Esophagus squamous epithelium (tissue), 5 donors: ENCODE measurements at regions of chr6 and their contacts with region 1.

Region 1: GRCh38 chr6:912871-913835 is 220.2 kb upstream of the EXOC2 start:
- DNase-seq: no peak
- H3K4me3 ChIP-seq: no peak overlapping the region
- H3K27ac ChIP-seq: no peak overlapping the region
- H3K4me1 ChIP-seq: peaks cover 0 to 10% (median 0%) of the 10 kb centered on the region in 3 donors
- H3K27me3 ChIP-seq: peaks cover 0 to 11% (median 0%) of the 10 kb centered on the region in 4 donors
- CTCF ChIP-seq: peak; percentile 15 to 63 (median 46)
- POLR2A ChIP-seq: no peak

Region 2: DNA sequence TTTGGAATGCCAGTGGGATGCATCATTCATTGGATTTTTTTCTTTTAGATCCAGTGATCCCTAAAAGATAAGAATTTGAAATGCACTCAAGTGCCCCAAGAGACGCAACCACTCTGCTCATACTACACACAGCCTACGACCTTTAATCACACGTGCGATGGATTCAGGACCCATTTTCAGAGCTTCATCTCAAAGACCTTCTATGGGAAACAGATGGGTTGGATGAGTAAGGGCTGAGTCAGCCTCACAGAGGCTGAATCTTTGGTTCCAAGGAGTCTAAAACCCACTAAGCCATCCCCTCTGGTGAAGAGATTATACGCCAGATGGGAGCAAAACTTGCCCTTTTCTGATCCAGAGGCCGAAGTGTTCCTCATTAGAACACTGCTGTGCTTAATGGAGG is 45.4 kb after region 1 on chr6:
- intact Hi-C with region 1: no loop called
- DNase-seq: no peak
- H3K4me3 ChIP-seq: no peak overlapping the region
- H3K27ac ChIP-seq: no peak overlapping the region
- H3K4me1 ChIP-seq: peaks cover 0 to 8% (median 5%) of the 10 kb centered on the region in 3 donors
- H3K27me3 ChIP-seq: peaks cover 0 to 6% (median 0%) of the 10 kb centered on the region in 4 donors
- CTCF ChIP-seq: no peak
- POLR2A ChIP-seq: no peak

Region 3: DNA sequence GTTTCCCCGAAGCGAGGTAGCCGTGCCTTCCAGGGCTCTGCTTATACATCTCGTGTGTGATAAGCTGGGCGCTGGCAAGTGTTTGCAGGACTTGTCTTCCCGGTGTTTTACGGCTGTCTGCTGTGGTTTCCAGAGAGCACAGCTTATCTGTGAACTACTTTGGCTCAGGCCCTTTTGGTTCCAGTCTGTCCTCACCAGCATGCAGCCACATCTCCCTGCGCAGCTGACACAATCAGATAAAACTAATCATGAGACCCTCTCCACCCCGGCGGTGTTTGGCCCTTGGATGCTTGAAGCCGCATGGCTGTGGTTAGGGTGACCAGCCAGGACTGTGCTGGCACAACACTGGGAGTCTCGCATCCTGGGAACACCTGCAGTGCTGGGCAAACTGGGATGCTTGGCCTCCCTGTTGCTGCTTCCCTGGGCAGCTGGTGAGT is 156.9 kb after region 1 on chr6:
- intact Hi-C with region 1: no loop called
- DNase-seq: no peak
- H3K4me3 ChIP-seq: no peak overlapping the region
- H3K27ac ChIP-seq: no peak overlapping the region
- H3K4me1 ChIP-seq: peaks cover 0 to 10% (median 0%) of the 10 kb centered on the region in 3 donors
- H3K27me3 ChIP-seq: no peaks in the 10 kb centered on the region
- CTCF ChIP-seq: no peak
- POLR2A ChIP-seq: no peak

Region 4: DNA sequence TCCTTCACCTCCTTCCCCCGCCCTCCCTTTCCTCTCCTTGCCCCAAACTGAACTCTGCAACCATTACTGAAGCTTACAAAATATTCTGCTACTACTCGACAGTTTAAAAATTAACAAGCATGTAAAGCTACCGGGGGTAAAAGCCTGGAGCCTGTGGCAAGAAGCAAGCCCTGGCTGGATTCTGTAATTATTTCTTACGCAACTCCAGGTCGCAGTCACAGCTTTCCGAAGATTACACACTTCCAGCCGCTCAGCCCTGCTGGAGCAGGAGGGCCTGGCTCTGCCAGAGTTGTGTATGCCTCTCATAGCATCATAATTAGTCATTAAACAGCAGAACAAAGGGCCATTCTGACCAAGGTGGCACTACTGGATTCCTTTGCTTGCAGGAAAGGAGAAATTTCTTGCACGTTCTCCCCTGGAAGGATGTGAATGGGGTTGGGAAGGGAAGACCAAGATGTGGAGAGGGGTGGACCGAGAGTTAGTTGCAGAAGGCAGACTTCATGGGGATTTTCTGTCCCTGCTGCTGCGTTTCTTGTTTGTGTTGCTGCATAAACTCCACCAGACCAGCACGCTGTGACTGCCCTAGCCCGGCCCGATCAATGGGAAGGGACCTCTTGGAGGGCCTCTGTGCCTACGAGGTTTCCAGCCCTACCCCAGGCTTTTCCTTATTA is 422.3 kb after region 1 on chr6:
- intact Hi-C with region 1: loop called (anchors 10 kb)
- DNase-seq: no peak
- H3K4me3 ChIP-seq: no peak overlapping the region
- H3K27ac ChIP-seq: peak overlapping the region; percentile 14 to 81 (median 44)
- H3K4me1 ChIP-seq: peaks cover 4 to 23% (median 11%) of the 10 kb centered on the region in 3 donors
- H3K27me3 ChIP-seq: peaks cover 0 to 6% (median 0%) of the 10 kb centered on the region in 4 donors
- CTCF ChIP-seq: peak in 2 of 6 experiments; percentile 9 to 17
- POLR2A ChIP-seq: no peak